ENCODE measurements at regions of chr19 and their contacts with region 1.

Region 1: DNA sequence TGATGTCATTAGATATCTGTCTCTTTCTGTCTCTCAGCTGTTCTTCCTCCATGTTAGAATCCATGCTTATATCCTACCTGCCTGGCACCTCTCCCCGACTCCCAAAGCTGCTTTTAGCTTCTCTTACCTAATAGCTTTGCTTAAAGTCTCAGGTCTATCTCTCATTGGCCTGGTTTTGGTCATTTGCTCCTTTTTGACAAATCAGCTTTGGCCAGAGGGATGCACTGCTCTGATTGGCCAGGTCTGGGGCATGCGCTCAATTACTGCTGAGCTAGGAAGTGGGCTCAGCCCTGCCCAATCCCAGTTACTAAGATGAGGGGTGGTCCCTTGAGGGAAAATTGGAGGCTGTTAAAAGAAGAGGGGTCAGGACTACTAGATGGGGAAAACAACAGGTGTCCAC is 11.5 kb upstream of the CLASRP start:
- DNase-seq: no peak
- ATAC-seq: peak; percentile 54 to 65; a peak in 4 of 6 replicates
- H3K4me3 ChIP-seq: no peak overlapping the region
- H3K27ac ChIP-seq: no peak overlapping the region
- H3K4me1 ChIP-seq: no peaks in the 10 kb centered on the region
- CTCF ChIP-seq: no peak
- EP300 ChIP-seq: no peak
- POLR2A ChIP-seq: no peak
- RAD21 ChIP-seq: no peak

Region 2: DNA sequence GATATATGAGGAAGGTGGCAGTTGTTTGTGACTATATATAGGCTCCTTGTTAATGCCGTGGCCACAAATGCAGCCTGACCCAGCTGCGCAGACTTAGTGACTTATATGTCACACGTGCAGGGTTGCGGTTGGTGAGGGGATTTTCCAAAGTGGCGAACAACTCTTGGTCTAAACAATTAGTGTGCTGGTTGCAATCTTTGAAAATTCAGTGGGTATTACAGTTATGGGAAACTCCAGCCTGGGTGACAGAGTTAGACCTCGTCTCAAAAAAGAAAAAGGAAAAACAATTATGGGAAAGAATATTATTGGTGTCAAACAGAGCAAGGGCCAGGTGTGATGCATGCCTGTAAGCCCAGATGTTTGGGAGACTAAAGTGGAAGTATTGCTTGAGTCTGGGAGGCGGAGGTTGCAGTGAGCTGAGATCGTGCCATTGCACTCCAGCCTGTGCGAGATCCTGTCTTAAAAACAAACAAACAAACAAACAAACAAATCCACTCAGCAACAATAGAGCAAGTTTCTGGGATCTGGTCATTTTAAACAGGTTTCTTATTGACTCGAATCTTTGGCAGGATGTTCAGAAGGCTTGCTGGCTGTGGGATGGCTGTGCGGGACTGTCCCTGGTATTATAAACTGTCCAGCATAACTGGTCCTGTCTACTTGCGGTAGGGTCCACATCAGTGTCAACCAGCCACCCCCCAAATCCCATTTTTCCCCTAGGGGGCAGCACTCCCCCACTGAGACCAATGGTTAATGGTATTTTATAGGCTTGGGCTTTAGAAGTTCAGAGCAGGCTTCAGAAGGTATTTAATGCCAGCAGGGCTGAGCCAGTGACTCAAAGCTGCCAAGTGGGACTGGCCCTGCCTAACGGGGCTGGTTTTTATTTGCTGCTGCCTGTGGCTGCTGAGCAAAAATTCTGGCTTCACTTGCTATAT is 10.7 kb before region 1 on chr19:
- CTCF ChIA-PET with region 1: interaction called, 27 read pairs
- POLR2A ChIA-PET with region 1: no interaction called
- DNase-seq: peak; percentile 78 to 82
- ATAC-seq: peak; percentile 91 to 94
- H3K4me3 ChIP-seq: no peak overlapping the region
- H3K27ac ChIP-seq: no peak overlapping the region
- H3K4me1 ChIP-seq: no peaks in the 10 kb centered on the region
- CTCF ChIP-seq: peak; percentile 84
- EP300 ChIP-seq: no peak
- POLR2A ChIP-seq: no peak
- RAD21 ChIP-seq: peak; percentile 72 to 87

Region 3: DNA sequence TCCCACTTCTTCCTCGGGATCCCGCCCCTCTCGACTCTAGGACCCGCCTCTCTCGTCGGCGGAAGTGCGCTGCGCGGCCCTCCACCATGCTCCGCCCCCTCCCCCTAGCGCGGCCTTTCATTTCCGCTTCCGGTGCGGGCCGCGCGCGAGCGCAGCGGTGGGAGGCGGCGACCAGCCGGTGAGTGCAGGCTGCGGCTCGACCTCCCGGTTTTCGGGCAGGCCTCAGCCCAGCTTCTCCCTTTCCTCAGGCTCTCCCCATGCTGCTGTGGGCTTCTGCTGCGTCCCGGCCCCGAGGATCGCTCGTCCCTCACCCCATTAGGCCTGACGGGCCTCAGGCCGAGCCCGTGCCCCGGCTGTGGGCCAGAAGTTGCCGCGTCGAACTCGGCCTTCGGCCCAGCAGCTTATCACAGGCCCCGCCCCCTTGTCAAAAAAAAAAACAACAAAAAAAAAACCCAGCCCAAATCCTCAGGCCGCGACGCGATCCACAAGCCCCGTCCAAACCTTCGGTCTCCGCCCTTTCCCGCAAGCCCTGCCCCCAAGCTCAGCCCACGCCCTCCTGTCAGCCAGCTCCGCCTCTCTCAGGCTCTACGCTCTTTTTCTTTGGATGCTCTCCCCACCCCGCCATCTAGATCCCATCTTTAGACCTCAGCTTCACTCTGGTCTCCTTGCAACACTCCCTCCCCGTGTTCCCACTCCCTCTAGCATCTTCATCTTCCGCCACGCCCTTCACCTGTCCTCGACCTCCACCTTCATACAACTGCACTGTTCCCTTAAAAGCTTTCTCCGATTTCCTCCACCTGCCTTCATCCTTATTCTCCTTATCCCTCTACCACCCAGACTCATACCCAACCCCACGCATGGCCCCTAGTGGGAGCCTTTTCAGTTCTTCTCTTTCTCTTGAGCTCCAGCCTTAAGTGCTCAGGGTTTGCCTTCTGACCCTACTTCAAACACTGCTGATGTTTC is 11.8 kb after region 1 on chr19 and contains the start of gene CLASRP:
- CTCF ChIA-PET with region 1: interaction called, 16 read pairs
- POLR2A ChIA-PET with region 1: interaction called, 12 read pairs
- DNase-seq: peak; percentile 90 to 92
- ATAC-seq: peak; percentile 99
- H3K4me3 ChIP-seq: peak within 1 kb of the TSS; percentile 72
- H3K27ac ChIP-seq: peak within 1 kb of the TSS; percentile 85 to 90
- H3K4me1 ChIP-seq: peaks cover 11% of the 10 kb centered on the region
- CTCF ChIP-seq: no peak
- EP300 ChIP-seq: no peak
- POLR2A ChIP-seq: peak; percentile 92
- RAD21 ChIP-seq: no peak
- polyA plus RNA-seq, gene CLASRP: 30.7 and 39.0 TPM in 2 replicates

Region 4: DNA sequence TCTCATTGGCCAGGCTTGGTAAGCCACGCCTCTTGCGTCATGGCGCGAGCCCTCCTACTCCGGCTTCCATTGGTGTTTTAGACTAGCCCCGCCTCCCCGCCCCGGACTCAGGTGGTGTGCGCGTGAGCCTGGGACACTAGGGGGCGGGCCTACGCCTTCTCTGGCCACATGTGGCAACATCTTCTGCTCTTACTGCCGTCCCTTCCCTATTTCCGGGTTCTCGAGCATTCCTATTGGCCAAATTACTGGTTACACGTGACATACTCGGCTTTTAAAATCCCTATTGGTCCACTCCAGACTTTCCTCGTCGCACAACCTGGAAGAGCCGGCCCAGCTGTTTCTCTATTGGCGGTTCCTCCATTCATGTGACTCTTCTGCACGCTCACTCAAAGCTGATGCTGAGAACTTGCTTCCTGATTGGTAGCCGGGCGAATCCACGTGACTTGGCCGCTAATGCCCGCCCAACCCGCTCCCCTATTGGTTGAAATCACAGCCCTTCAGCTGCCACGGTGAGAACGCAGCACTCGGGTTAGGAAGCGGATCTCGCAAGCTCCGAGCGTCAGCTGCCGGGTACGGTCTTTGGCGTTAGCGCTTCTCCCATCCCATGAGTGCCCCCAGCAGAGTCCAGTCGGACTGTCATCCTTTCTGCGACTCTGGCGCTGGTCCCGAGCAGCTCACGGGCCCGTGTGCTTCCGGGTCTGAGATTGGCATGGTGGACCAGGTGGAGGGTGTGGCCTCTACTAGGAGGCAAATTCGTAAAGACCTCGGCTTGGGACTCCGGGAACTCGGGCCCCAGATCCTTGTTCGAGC is 151.1 kb after region 1 on chr19 and contains the start of gene BLOC1S3:
- CTCF ChIA-PET with region 1: no interaction called
- POLR2A ChIA-PET with region 1: no interaction called
- DNase-seq: peak; percentile 100
- ATAC-seq: peak; percentile 87 to 94
- H3K4me3 ChIP-seq: peak within 1 kb of the TSS; percentile 71
- H3K27ac ChIP-seq: peak within 1 kb of the TSS; percentile 76 to 85
- H3K4me1 ChIP-seq: peaks cover 11% of the 10 kb centered on the region; the same call in 2 of the 3 replicates
- CTCF ChIP-seq: no peak; the same call in 2 of the 3 replicates
- EP300 ChIP-seq: no peak
- POLR2A ChIP-seq: peak; percentile 76
- RAD21 ChIP-seq: peak in 1 of 2 experiments; percentile 6; a peak in 1 of 5 replicates
- polyA plus RNA-seq, gene BLOC1S3: 7.5 and 10.5 TPM in 2 replicates